SK-N-SH (cell line): ENCODE measurements at regions of chr18 and their contacts with region 1.

Region 1: GRCh38 chr18:63016270-63016669 is 300.9 kb downstream of the PHLPP1 start:
- DNase-seq: peak; percentile 82
- H3K4me3 ChIP-seq: peak overlapping the region in 1 of 2 experiments; percentile 4; a peak in 1 of 4 replicates
- H3K27ac ChIP-seq: no peak overlapping the region
- H3K4me1 ChIP-seq: no peaks in the 10 kb centered on the region
- H3K27me3 ChIP-seq: peaks cover 4% of the 10 kb centered on the region; the same call in 1 of the 2 replicates
- CTCF ChIP-seq: peak; percentile 91
- EP300 ChIP-seq: no peak
- RAD21 ChIP-seq: peak; percentile 97

Region 2: DNA sequence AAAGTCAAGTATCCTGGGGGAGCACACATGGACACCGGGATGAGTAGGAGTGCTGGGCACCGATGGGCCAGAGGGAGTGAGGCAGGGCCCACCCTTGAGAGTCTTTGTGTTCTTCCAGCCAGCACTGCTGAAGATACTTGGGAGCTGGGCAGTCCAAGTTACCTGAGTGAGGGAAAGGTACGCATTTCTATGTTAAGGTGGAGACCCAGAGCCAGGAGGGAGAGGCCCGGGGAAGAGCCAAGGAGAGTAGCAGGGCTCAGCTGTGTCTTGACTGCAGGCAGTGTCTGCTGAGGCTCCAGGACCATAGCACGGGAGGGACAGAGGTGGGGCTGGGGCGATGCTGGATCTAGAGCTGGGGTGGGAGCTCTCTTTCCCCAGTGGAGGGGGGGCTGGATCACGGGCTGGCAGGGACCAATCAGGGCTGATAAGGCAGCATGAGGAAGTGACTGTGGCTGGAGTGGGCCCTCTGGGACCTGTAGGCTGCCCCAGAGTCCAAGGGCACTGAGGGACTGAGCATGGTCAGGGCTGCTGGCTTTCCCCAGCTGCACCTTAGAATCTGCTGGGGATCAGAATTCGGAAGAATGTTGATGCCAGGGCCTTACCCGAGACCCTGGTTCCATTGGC is 11.7 kb before region 1 on chr18:
- CTCF ChIA-PET with region 1: interaction called, 14 read pairs
- POLR2A ChIA-PET with region 1: no interaction called
- DNase-seq: no peak
- H3K4me3 ChIP-seq: no peak overlapping the region
- H3K27ac ChIP-seq: no peak overlapping the region
- H3K4me1 ChIP-seq: no peaks in the 10 kb centered on the region; a peak in 1 of 4 replicates
- H3K27me3 ChIP-seq: no peaks in the 10 kb centered on the region
- CTCF ChIP-seq: no peak
- EP300 ChIP-seq: no peak
- RAD21 ChIP-seq: no peak

Region 3: DNA sequence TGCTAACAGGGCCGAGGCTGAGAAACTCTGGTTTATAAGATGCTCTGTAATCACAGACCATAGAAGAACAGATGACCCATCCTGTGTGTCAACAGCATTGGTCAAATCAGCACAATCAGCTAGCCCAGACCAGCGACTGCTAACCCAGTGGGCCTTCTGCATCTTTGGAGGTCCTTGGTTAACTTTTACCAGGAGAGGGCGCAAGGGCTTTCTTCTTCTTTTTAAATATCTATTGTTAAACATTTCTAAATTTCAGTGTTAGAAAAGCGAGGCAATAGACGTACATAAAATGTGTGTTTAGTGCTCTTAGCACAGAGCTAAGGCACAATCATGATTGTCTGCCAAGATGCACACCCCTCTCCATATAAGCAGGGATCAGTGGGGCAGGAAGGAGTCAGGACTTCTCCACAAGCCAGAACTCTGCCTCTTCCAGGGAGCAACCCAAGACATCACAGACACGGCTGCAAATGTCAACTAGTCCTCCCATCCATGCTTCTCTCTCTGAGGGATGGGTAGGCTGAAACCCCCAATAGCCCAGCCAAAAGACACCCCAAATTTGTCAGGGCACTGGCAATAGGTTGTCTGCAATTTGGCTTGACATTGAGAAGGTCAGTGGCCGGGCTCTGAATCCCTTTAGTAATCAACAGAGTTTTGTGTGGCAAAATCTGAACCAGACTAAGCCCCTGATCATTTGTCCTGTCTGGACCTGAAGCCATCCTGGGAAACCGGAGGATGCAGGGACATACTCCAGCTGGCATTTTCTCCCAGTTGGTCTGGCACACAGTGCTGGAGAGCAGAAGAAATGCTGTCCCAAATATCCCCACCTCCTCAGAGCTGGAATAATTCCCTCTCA is 115.1 kb after region 1 on chr18:
- CTCF ChIA-PET with region 1: interaction called, 11 read pairs
- POLR2A ChIA-PET with region 1: no interaction called
- DNase-seq: peak; percentile 53
- H3K4me3 ChIP-seq: no peak overlapping the region; a peak in 1 of 4 replicates
- H3K27ac ChIP-seq: no peak overlapping the region; a peak in 1 of 4 replicates
- H3K4me1 ChIP-seq: peaks cover 0 to 12% of the 10 kb centered on the region in 2 experiments; a peak in 1 of 4 replicates
- H3K27me3 ChIP-seq: no peaks in the 10 kb centered on the region
- CTCF ChIP-seq: peak; percentile 79
- EP300 ChIP-seq: no peak
- RAD21 ChIP-seq: peak; percentile 74